ENCODE measurements at regions of chr9 and their contacts with region 1.

Region 1: GRCh38 chr9:134443168-134444037 is 117.1 kb downstream of the RXRA start:
- DNase-seq: peak; percentile 94
- ATAC-seq: peak; percentile 99
- H3K4me3 Mint-ChIP-seq: no peak overlapping the region
- H3K27ac Mint-ChIP-seq: no peak overlapping the region
- H3K4me1 Mint-ChIP-seq: peaks cover 20% of the 10 kb centered on the region
- H3K27me3 Mint-ChIP-seq: peaks cover 17% of the 10 kb centered on the region
- CTCF ChIP-seq: peak; percentile 99

Region 2: DNA sequence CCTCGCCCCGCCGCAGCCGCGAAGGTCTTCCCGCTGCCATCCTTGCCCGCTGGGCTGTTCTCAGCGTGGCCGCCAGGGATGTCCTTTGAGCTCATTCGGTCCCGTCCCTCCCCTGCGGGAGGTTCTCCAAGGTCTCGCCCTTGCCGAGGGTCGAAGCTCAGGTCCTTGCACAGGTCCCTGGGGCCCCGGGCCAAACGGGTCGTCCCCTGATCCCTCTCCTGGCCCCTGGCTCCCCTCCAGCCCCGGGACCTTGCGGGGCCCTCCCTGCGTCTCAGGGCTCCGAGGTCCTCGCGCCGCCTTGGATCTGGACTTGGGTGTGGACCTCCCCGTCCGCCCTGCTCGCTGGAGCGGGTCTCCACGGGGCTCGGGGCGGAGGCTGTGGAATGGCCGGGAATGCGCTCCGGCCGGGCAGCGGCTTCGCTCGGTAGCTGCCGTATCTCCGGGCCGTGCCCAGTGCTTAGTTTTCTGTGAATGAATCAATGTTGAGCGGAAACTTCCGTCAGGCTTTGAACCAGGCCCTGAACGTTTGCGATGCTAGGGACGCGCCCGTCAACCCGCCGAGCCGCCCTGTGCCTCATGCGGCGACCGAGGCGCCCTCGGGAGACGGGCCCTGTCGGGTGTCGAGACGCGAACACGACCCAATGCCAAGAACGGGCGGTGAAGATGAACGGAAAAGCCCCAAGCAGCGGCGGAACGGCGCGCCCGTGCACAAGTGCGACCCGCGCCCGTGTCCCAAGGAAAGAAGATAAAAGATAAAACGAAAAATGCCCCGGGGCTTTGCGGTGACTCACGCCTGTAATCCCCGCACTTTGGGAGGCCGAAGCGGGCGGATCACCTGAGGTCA is 279.8 kb before region 1 on chr9:
- CTCF ChIA-PET with region 1: interaction called, 10 read pairs
- POLR2A ChIA-PET with region 1: interaction called, 7 read pairs
- intact Hi-C with region 1: no loop called
- DNase-seq: peak; percentile 77
- ATAC-seq: peak; percentile 8
- H3K4me3 Mint-ChIP-seq: no peak overlapping the region
- H3K27ac Mint-ChIP-seq: no peak overlapping the region
- H3K4me1 Mint-ChIP-seq: peaks cover 16% of the 10 kb centered on the region
- H3K27me3 Mint-ChIP-seq: no peaks in the 10 kb centered on the region
- CTCF ChIP-seq: peak; percentile 65

Region 3: DNA sequence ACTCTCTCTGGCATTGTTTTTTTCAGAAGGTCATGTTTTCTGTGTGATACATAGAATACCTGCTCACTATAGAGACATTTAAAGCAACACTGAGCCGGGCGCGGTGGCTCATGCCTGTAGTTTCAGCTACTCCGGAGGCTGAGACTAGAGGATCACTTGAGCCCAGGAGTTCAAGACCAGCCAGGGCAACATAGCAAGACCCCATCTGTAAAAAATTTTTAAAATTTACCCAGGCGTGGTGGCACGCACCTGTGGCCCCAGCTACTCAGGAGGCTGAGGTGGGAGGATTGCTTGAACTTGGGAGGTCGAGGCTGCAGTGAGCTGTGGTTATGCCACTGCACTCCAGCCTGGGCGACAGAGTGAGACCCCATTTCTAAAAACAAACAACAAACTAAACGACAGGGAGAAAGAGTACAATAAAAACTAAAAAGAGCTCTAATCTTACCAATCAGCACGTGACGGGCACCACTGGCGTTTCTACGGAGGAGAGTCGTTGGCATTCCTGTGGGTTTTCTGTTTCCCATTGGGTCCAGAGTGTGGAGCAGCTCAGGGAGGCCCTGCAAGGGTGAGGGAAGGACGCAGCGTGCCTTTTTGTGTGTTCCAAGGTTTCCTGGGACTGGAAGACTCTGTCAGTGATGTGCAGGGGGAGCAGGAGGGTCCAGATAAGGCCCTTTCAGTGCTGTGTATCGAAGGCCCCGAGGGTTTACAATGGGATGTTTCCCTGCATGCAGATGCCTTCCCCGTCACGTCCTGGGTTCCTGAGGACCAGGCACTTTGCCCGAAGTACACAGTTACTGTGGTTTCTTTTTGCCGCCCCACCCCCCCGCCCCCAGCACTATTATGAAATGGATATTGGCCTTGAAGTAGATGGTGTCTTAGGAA is 271.8 kb before region 1 on chr9:
- CTCF ChIA-PET with region 1: interaction called, 17 read pairs
- POLR2A ChIA-PET with region 1: interaction called, 3 read pairs
- intact Hi-C with region 1: loop called (anchors 5 kb)
- DNase-seq: no peak
- ATAC-seq: no peak
- H3K4me3 Mint-ChIP-seq: no peak overlapping the region
- H3K27ac Mint-ChIP-seq: no peak overlapping the region
- H3K4me1 Mint-ChIP-seq: peaks cover under 1% of the 10 kb centered on the region
- H3K27me3 Mint-ChIP-seq: no peaks in the 10 kb centered on the region
- CTCF ChIP-seq: no peak

Region 4: DNA sequence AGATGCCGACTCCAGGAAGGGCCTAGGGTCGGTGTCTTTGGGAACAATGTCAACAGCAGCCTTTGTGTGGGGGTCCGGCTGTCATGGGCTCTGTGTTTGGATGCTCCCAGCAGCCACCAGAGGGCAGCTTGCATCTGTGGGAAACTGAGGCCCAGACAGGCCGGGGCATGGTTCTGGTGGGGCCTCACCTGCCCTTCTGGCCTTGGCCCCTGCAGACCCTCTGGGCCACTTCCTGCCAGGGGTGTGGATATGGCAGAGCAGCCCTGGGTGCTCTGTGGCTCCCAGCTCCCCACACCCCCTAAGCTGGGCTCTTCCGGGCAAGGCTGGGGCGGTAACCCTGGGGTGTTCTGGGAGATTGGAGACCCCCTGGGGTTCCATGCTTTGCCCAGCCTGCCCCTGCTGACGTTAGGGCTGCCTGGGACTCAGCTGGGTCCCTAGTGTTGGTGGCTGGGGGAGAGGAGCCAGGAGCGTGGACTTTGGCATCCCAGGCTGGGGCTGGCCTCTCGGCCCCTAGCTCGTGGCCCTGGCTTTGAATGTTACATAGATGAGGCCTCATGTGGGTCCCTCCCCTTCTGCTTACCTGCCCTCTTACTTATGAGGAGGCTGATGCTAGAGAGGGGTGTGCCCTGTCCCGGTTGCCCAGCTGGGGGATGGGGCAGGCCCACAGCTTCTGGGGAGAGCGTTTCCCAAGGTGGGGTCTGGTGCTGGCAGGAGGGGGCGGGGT is 78.8 kb before region 1 on chr9:
- CTCF ChIA-PET with region 1: interaction called, 36 read pairs
- POLR2A ChIA-PET with region 1: interaction called, 4 read pairs
- intact Hi-C with region 1: no loop called
- DNase-seq: peak; percentile 57
- ATAC-seq: peak; percentile 65
- H3K4me3 Mint-ChIP-seq: no peak overlapping the region
- H3K27ac Mint-ChIP-seq: no peak overlapping the region
- H3K4me1 Mint-ChIP-seq: no peaks in the 10 kb centered on the region
- H3K27me3 Mint-ChIP-seq: no peaks in the 10 kb centered on the region
- CTCF ChIP-seq: peak; percentile 61

Region 5: GRCh38 chr9:134378901-134379338 is 64.5 kb before region 1 on chr9:
- CTCF ChIA-PET with region 1: interaction called, 11 read pairs
- POLR2A ChIA-PET with region 1: interaction called, 3 read pairs
- intact Hi-C with region 1: loop called (anchors 5 kb)
- DNase-seq: no peak
- ATAC-seq: no peak
- H3K4me3 Mint-ChIP-seq: no peak overlapping the region
- H3K27ac Mint-ChIP-seq: no peak overlapping the region
- H3K4me1 Mint-ChIP-seq: peaks cover 22% of the 10 kb centered on the region
- H3K27me3 Mint-ChIP-seq: no peaks in the 10 kb centered on the region
- CTCF ChIP-seq: no peak

Region 6: GRCh38 chr9:134391314-134392231 is 51.8 kb before region 1 on chr9:
- CTCF ChIA-PET with region 1: interaction called, 23 read pairs
- POLR2A ChIA-PET with region 1: interaction called, 6 read pairs
- intact Hi-C with region 1: no loop called
- DNase-seq: peak; percentile 92
- ATAC-seq: peak; percentile 57
- H3K4me3 Mint-ChIP-seq: peak overlapping the region; percentile 77
- H3K27ac Mint-ChIP-seq: peak overlapping the region; percentile 99
- H3K4me1 Mint-ChIP-seq: peaks cover 65% of the 10 kb centered on the region
- H3K27me3 Mint-ChIP-seq: peaks cover 4% of the 10 kb centered on the region
- CTCF ChIP-seq: no peak

Region 7: DNA sequence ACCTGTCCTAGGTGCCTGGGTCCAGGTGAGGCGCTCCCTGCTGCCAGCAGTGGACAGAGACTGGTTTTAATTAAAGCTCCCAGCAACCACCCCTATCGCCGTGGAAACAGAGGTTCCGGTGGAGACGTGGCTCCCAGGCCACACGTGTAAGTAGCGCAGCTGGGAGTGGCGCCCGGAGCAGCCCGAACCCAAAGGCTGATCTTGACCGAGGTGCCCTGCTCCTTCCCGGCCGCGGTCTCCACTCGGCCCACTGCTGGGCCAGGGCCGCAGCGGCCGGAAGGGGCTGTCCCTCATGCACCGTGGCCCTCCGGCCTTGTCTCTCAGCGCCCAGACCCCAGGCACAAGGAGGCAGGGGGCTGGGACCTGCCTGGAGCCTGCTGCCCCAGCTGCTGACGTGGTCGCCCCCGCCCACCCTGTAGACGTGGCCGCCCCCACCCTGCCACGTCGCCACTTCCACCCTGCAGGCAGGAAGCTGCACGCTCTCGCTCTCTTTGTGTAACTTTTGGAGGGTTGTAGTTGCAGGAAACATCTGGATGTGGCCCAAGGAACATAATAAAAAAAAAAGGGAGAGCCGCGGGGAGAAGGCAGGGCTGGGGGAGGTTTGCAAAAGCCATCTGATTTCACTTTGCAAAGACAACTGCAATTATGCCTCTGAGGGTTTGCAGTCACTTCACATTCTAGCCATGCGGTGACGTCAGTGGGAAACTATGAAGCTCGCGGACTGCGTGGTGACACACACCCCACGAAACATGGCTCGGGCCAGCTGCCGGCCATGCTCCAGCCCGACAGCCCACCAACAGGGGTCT is 12.7 kb after region 1 on chr9:
- CTCF ChIA-PET with region 1: interaction called, 10 read pairs
- POLR2A ChIA-PET with region 1: interaction called, 4 read pairs
- intact Hi-C with region 1: no loop called
- DNase-seq: peak; percentile 87
- ATAC-seq: peak; percentile 88
- H3K4me3 Mint-ChIP-seq: peak overlapping the region; percentile 72
- H3K27ac Mint-ChIP-seq: peak overlapping the region; percentile 97
- H3K4me1 Mint-ChIP-seq: peaks cover 16% of the 10 kb centered on the region
- H3K27me3 Mint-ChIP-seq: no peaks in the 10 kb centered on the region
- CTCF ChIP-seq: no peak